BJ (cell line): ENCODE measurements at regions of chr2 and their contacts with region 1.

Region 1: DNA sequence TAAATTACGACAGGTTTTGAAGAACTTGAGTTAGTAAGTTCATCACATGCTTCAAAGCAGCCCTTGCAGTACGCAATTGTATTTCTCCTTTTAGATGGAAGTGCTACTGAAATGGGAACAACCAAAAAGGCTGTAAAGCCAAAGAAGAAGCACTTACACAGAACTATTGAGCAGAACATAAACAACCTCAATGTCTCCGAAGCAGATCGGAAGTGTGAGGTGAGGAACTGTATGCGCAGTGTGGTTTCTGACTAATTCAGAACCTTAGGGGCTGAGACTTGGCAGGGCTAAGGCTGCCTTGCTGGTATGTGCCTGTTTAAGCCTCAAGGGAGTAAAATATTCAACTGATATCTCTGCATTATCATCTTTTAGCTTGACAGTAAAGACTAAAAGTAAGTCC is 8.4 kb downstream of the NCAPH start:
- DNase-seq: no peak
- H3K4me3 ChIP-seq: no peak overlapping the region
- H3K27me3 ChIP-seq: no peaks in the 10 kb centered on the region
- CTCF ChIP-seq: no peak

Region 2: GRCh38 chr2:96320728-96321622 is 23.0 kb before region 1 on chr2:
- CTCF ChIA-PET with region 1: no interaction called
- POLR2A ChIA-PET with region 1: interaction called, 17 read pairs
- DNase-seq: no peak
- H3K4me3 ChIP-seq: peak overlapping the region; percentile 51
- H3K27me3 ChIP-seq: peaks cover 3% of the 10 kb centered on the region; the same call in 1 of the 2 replicates
- CTCF ChIP-seq: no peak

Region 3: DNA sequence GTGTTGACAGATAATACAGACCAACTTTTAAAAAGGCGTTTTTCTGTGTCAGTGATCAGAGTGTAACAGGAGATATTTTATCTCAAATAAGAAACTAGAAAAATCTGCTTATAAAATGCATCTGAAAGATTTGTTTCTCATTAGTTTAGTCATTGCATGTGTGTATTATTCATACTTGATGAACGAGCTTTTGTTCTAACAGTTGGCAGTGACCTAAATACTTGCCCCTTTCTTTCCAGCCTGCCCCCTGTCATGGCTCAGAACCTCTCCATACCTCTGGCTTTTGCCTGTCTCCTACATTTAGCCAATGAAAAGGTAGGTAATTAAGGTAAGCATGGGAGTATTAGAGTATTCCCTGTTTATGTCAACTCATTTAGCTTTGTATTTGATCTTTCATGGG is 25.2 kb after region 1 on chr2:
- CTCF ChIA-PET with region 1: no interaction called
- POLR2A ChIA-PET with region 1: no interaction called
- DNase-seq: no peak
- H3K4me3 ChIP-seq: no peak overlapping the region
- H3K27me3 ChIP-seq: no peaks in the 10 kb centered on the region
- CTCF ChIP-seq: no peak

Region 4: DNA sequence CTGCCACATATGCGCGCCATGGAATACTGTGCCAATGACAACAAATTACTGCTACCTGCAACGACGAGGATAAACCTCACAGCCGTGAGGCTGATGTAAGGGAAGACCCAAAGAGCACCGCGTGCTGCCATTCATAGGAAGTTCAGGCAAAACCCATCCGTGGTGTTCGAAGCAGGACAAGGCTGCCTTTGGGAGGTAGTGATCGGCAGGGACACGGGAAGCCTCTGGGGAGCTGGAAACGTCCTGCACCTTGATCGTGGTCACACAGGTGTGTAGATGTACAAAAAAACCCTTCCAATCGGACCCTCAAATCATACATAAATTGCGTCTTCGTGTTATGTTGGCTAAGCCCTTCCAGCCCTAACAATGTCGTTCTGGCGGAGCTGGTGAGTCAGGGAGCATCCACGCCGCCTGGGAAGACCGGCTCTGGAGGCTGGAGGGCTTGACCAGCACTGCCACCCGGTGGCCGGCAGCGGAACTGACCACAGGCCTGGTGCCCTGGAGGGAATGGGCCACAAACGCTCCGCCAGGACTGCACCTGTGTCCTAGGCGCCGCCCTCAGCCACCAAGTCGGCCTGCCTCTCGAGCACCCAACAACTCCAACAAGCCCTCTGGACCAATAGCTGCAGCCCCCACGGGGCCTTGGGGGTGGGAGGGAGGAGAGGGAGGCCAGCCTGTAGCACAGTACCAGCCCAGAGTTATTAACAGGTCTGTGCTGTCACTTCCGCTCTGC is 165.3 kb after region 1 on chr2:
- CTCF ChIA-PET with region 1: no interaction called
- POLR2A ChIA-PET with region 1: no interaction called
- DNase-seq: peak; percentile 16
- H3K4me3 ChIP-seq: no peak overlapping the region
- H3K27me3 ChIP-seq: peaks cover 5% of the 10 kb centered on the region
- CTCF ChIP-seq: peak; percentile 99